Activated naive CD4-positive, alpha-beta T cell treated with anti-CD3 and anti-CD28 coated beads for 36 hours (primary cell): ENCODE measurements at regions of chr10 and their contacts with region 1.

Region 1: GRCh38 chr10:11138314-11139033 is 120.8 kb downstream of the CELF2 start:
- DNase-seq: no peak
- H3K4me3 Mint-ChIP-seq: no peak overlapping the region
- H3K27ac Mint-ChIP-seq: no peak overlapping the region
- H3K4me1 Mint-ChIP-seq: peaks cover 36% of the 10 kb centered on the region
- H3K27me3 Mint-ChIP-seq: no peaks in the 10 kb centered on the region

Region 2: DNA sequence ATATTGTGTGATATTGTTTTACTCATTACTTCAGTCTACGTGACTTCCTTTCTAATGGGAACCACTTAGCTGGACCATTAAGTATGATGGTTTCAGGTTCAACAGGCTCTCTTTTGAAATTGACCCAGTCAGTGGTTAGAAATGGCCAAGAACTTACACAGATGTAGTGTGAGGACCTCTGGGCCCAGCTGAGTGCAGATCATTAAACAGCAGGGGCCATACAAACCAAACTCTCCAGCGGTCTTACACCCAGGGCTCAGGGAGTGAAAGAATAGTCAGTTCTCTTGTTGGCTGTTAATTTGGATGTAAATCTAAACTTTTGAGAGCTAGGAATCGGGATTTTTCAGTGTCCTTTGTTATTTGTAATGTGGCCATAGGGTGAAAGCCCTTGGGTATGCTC is 13.5 kb before region 1 on chr10:
- CTCF ChIA-PET with region 1: interaction called, 3 read pairs
- intact Hi-C with region 1: loop called (anchors 2 kb)
- DNase-seq: no peak
- H3K4me3 Mint-ChIP-seq: no peak overlapping the region
- H3K27ac Mint-ChIP-seq: no peak overlapping the region
- H3K4me1 Mint-ChIP-seq: peaks cover 20% of the 10 kb centered on the region
- H3K27me3 Mint-ChIP-seq: no peaks in the 10 kb centered on the region